ENCODE measurements at regions of chr11 and their contacts with region 1.

Region 1: DNA sequence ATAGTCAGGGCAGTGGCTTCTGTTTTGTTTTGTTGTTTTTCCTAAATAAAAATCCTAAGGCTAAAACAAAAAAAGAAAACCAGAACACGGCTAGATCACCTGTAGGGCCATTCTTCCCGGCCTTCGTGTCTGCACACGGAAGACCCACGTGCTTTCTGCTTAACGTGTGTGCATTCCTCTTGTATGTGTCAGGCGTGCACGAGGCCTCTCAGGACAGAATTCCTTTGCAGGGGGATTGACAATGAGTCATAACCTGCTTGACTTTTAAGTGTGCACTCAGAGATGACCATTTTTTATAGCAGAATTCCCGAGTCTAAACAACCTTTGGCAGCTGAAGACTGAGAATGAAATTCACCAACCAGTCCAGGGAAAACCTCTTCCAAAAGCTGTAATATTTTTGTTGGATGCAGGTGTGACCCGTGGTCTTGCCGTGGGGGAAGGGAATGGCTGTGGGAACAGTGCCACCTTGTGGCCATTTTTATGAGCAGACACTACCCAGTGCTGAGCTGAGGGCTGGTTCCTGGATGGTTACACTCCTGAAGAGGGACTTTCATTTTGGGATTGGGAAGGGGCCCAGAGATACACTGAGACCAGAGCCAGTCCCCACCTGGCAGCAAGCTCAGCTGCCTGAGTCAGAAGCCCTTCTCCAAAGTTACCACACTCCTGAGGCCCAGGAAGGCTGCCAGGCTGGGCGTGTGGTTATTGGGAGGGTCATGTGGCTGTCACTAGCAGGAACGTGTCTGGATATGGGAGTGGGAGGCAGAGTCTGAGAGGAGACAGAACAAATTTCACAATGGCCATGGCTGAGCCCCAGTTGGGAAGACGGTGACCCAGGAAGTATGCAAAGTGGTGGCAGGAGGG is 35.8 kb upstream of the DKK3 start:
- DNase-seq: peak; percentile 22 to 79 (median 65)
- ATAC-seq: peak; percentile 77
- H3K4me3 ChIP-seq: no peak overlapping the region
- H3K4me3 Mint-ChIP-seq: no peak overlapping the region
- H3K27ac ChIP-seq: no peak overlapping the region
- H3K27ac Mint-ChIP-seq: no peak overlapping the region
- H3K4me1 ChIP-seq: no peaks in the 10 kb centered on the region
- H3K4me1 Mint-ChIP-seq: peaks cover 3% of the 10 kb centered on the region
- H3K27me3 ChIP-seq: no peaks in the 10 kb centered on the region
- H3K27me3 Mint-ChIP-seq: peaks cover 3% of the 10 kb centered on the region
- CTCF ChIP-seq: peak; percentile 88

Region 2: DNA sequence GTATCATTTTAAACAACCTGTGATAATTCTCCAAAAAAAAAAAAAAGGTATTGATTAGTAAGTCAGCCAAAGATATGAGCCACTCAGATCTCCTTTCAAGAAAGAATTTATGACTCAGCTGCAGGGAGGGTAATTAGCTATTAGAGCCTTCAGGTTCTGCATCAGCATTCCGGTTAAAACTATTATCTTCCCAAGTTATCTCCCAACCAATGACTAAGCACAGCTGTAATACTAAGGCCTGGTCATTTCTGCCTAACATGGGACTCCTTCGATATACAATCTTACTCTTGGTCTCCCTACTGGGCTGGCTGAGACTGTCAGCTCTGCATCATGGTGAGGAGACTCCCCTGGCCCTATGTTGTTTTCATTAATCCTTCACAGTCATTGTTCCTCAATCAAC is 1810.6 kb before region 1 on chr11:
- CTCF ChIA-PET with region 1: no interaction called
- POLR2A ChIA-PET with region 1: no interaction called
- intact Hi-C with region 1: no loop called
- DNase-seq: no peak
- ATAC-seq: no peak
- H3K4me3 ChIP-seq: no peak overlapping the region
- H3K4me3 Mint-ChIP-seq: no peak overlapping the region
- H3K27ac ChIP-seq: no peak overlapping the region
- H3K27ac Mint-ChIP-seq: no peak overlapping the region
- H3K4me1 ChIP-seq: no peaks in the 10 kb centered on the region
- H3K4me1 Mint-ChIP-seq: no peaks in the 10 kb centered on the region
- H3K27me3 ChIP-seq: no peaks in the 10 kb centered on the region
- H3K27me3 Mint-ChIP-seq: no peaks in the 10 kb centered on the region
- CTCF ChIP-seq: no peak

Region 3: DNA sequence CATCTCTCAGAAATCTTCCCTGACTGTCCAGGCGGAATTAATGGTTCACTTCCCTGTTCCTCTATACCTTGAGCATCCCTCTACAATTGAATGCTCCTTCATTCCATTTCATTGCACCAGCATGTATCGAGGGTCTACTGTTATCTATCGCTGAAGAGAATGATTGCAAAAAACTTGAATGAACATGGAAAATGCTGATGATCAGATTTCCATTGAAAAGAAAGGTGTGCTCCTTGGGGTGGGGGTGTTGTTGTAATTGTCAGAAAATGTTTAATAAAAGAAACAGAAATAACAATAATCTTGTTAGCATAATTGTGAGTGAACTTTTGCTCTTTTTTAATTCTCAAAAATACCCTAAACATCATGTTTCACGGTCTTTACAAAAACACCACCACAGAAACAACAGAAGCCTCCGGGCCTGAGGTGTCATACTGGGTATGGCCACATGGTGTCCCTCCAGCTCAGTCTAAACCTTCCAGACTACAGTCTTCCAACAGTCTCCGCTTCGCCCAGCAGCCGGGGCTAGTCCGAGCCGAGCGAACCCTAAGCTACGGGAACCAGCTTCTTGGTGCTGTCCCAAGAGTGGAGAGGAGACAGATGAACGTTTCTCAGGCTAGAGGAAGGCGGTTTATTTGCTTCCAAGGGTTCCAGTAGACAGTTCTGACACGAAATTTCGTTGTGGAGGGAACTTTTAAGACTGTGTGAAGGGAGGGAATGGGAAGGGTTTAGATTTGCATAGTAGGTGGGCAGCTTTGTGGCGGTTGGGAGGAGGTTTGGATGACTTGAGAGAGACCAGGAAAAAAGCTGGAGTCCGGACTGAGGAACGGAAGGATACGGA is 1110.5 kb before region 1 on chr11:
- CTCF ChIA-PET with region 1: interaction called, 3 read pairs
- POLR2A ChIA-PET with region 1: no interaction called
- intact Hi-C with region 1: loop called in 1 of 2 experiments (anchors 5 kb)
- DNase-seq: peak; percentile 66 to 87 (median 82)
- ATAC-seq: peak; percentile 88
- H3K4me3 ChIP-seq: peak overlapping the region; percentile 50 to 53
- H3K4me3 Mint-ChIP-seq: peak overlapping the region; percentile 83
- H3K27ac ChIP-seq: no peak overlapping the region
- H3K27ac Mint-ChIP-seq: no peak overlapping the region
- H3K4me1 ChIP-seq: no peaks in the 10 kb centered on the region
- H3K4me1 Mint-ChIP-seq: peaks cover 20% of the 10 kb centered on the region
- H3K27me3 ChIP-seq: peaks cover 7 to 19% of the 10 kb centered on the region in 2 experiments
- H3K27me3 Mint-ChIP-seq: peaks cover 18% of the 10 kb centered on the region
- CTCF ChIP-seq: peak; percentile 98

Region 4: DNA sequence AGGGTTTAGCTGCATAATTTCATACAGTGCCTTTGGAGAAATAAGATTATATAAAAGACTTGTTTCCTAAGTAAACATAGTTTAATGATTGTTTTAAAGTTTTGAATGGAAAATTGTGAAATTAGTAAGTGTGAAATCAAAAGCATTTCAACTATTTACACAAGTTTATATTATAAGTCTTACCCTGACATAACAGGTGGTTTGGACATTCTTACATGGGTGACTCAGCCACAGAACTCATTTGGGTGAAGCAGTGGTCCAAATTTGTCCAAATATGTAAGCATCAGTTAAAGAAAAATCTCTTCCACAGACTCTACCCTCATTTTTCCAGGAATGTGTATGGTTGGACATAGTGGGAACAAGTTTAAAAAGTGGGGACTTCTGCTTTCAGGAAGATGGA is 134.5 kb before region 1 on chr11:
- CTCF ChIA-PET with region 1: no interaction called
- POLR2A ChIA-PET with region 1: no interaction called
- intact Hi-C with region 1: no loop called
- DNase-seq: no peak
- ATAC-seq: no peak
- H3K4me3 ChIP-seq: no peak overlapping the region
- H3K4me3 Mint-ChIP-seq: no peak overlapping the region
- H3K27ac ChIP-seq: no peak overlapping the region
- H3K27ac Mint-ChIP-seq: no peak overlapping the region
- H3K4me1 ChIP-seq: no peaks in the 10 kb centered on the region
- H3K4me1 Mint-ChIP-seq: no peaks in the 10 kb centered on the region
- H3K27me3 ChIP-seq: no peaks in the 10 kb centered on the region
- H3K27me3 Mint-ChIP-seq: no peaks in the 10 kb centered on the region
- CTCF ChIP-seq: no peak

Region 5: GRCh38 chr11:11931461-11932055 is 112.6 kb before region 1 on chr11:
- CTCF ChIA-PET with region 1: interaction called, 25 read pairs
- POLR2A ChIA-PET with region 1: no interaction called
- intact Hi-C with region 1: loop called (anchors 1 kb)
- DNase-seq: peak in 3 of 9 experiments; percentile 14 to 63 (median 50)
- ATAC-seq: peak; percentile 64
- H3K4me3 ChIP-seq: no peak overlapping the region
- H3K4me3 Mint-ChIP-seq: no peak overlapping the region
- H3K27ac ChIP-seq: no peak overlapping the region
- H3K27ac Mint-ChIP-seq: no peak overlapping the region
- H3K4me1 ChIP-seq: no peaks in the 10 kb centered on the region
- H3K4me1 Mint-ChIP-seq: peaks cover 5% of the 10 kb centered on the region
- H3K27me3 ChIP-seq: no peaks in the 10 kb centered on the region
- H3K27me3 Mint-ChIP-seq: no peaks in the 10 kb centered on the region
- CTCF ChIP-seq: peak; percentile 77

Region 6: DNA sequence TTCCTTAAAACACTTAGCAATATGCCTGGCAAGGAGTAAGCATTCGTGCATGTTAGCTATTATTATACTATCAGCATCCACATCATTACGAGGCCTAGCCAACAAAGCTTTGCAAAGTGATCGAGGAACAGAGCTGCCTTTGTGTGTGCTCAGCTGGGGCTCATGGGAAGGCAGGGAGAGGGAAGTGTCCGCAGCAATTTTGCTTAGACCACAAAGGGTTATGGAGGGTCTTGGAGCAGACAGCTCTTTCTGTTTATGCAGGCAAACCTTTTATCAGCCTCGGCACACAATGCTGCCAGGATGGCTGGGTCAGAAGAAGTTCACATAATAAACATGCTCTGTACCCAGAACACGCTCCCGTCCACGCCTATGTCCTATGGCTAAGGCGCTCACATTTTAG is 24.9 kb before region 1 on chr11:
- CTCF ChIA-PET with region 1: no interaction called
- POLR2A ChIA-PET with region 1: no interaction called
- intact Hi-C with region 1: no loop called
- DNase-seq: no peak
- ATAC-seq: no peak
- H3K4me3 ChIP-seq: no peak overlapping the region
- H3K4me3 Mint-ChIP-seq: no peak overlapping the region
- H3K27ac ChIP-seq: no peak overlapping the region
- H3K27ac Mint-ChIP-seq: no peak overlapping the region
- H3K4me1 ChIP-seq: no peaks in the 10 kb centered on the region
- H3K4me1 Mint-ChIP-seq: no peaks in the 10 kb centered on the region
- H3K27me3 ChIP-seq: no peaks in the 10 kb centered on the region
- H3K27me3 Mint-ChIP-seq: peaks cover 18% of the 10 kb centered on the region
- CTCF ChIP-seq: no peak

Region 7: GRCh38 chr11:12087075-12088004 is 43.2 kb after region 1 on chr11:
- CTCF ChIA-PET with region 1: interaction called, 14 read pairs
- POLR2A ChIA-PET with region 1: no interaction called
- intact Hi-C with region 1: no loop called
- DNase-seq: peak in 7 of 9 experiments; percentile 19 to 83 (median 54)
- ATAC-seq: peak; percentile 89
- H3K4me3 ChIP-seq: peak overlapping the region in 1 of 2 experiments; percentile 20
- H3K4me3 Mint-ChIP-seq: peak overlapping the region; percentile 30
- H3K27ac ChIP-seq: peak overlapping the region in 1 of 2 experiments; percentile 52
- H3K27ac Mint-ChIP-seq: peak overlapping the region; percentile 84
- H3K4me1 ChIP-seq: peaks cover 55% of the 10 kb centered on the region
- H3K4me1 Mint-ChIP-seq: peaks cover 71% of the 10 kb centered on the region
- H3K27me3 ChIP-seq: no peaks in the 10 kb centered on the region
- H3K27me3 Mint-ChIP-seq: no peaks in the 10 kb centered on the region
- CTCF ChIP-seq: no peak

Region 8: DNA sequence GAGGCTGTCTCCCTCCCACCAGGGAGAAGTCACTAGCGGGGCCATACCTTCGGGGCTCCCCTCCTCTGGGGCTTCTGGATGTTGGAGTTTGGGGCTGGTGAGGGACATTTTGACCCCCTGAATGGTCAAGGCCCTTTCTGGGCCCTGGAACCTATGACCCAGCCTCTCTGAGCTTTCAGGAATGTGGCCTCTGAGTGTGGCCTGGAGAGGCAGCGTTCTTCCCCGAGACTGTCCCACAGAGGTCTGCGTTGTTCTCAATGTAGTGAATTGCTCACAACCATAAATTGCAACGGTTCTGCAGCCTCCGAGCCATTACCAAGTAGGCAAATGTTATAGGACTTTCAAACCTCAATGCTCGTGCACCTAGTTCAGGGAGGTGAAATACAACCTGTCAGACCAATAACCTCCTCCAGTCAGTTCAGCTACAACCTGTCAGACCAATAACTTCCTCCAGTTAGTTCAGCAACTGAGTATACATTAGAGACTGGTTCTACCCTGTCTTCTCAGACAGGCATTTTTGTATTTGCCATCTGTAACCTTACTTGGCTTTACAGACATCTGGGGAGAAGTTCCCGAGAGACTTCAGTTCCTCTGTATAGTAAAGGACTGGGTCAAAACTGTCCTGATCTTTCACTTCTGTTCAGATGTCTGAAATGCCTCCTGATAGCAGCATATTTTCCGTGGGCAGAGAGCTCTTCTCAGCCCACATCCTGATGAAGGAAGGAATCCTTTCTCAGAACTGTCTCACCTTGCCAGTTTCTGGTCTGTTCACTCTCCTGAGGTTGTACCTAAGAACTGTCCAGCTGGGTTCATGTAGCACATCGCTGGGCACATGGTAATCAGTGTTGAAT is 100.4 kb after region 1 on chr11:
- CTCF ChIA-PET with region 1: no interaction called
- POLR2A ChIA-PET with region 1: no interaction called
- intact Hi-C with region 1: no loop called
- DNase-seq: no peak
- ATAC-seq: no peak
- H3K4me3 ChIP-seq: no peak overlapping the region
- H3K4me3 Mint-ChIP-seq: no peak overlapping the region
- H3K27ac ChIP-seq: no peak overlapping the region
- H3K27ac Mint-ChIP-seq: peak overlapping the region; percentile 16
- H3K4me1 ChIP-seq: peaks cover 34% of the 10 kb centered on the region
- H3K4me1 Mint-ChIP-seq: peaks cover 51% of the 10 kb centered on the region
- H3K27me3 ChIP-seq: no peaks in the 10 kb centered on the region
- H3K27me3 Mint-ChIP-seq: no peaks in the 10 kb centered on the region
- CTCF ChIP-seq: no peak

Region 9: GRCh38 chr11:12243486-12243885 is 199.3 kb after region 1 on chr11:
- CTCF ChIA-PET with region 1: interaction called, 61 read pairs
- POLR2A ChIA-PET with region 1: interaction called, 3 read pairs
- intact Hi-C with region 1: no loop called
- DNase-seq: no peak
- ATAC-seq: no peak
- H3K4me3 ChIP-seq: no peak overlapping the region
- H3K4me3 Mint-ChIP-seq: no peak overlapping the region
- H3K27ac ChIP-seq: no peak overlapping the region
- H3K27ac Mint-ChIP-seq: no peak overlapping the region
- H3K4me1 ChIP-seq: peaks cover 23% of the 10 kb centered on the region
- H3K4me1 Mint-ChIP-seq: peaks cover 21% of the 10 kb centered on the region
- H3K27me3 ChIP-seq: no peaks in the 10 kb centered on the region
- H3K27me3 Mint-ChIP-seq: no peaks in the 10 kb centered on the region
- CTCF ChIP-seq: no peak

Region 10: GRCh38 chr11:12288212-12288930 is 244.2 kb after region 1 on chr11:
- CTCF ChIA-PET with region 1: interaction called, 375 read pairs
- POLR2A ChIA-PET with region 1: interaction called, 3 read pairs
- intact Hi-C with region 1: no loop called
- DNase-seq: peak in 8 of 9 experiments; percentile 21 to 59 (median 47)
- ATAC-seq: no peak
- H3K4me3 ChIP-seq: no peak overlapping the region
- H3K4me3 Mint-ChIP-seq: no peak overlapping the region
- H3K27ac ChIP-seq: no peak overlapping the region
- H3K27ac Mint-ChIP-seq: no peak overlapping the region
- H3K4me1 ChIP-seq: peaks cover 8% of the 10 kb centered on the region
- H3K4me1 Mint-ChIP-seq: peaks cover 7% of the 10 kb centered on the region
- H3K27me3 ChIP-seq: no peaks in the 10 kb centered on the region
- H3K27me3 Mint-ChIP-seq: no peaks in the 10 kb centered on the region
- CTCF ChIP-seq: peak; percentile 59